PC-9 (cell line): ENCODE measurements at regions of chr5 and their contacts with region 1.

Region 1: DNA sequence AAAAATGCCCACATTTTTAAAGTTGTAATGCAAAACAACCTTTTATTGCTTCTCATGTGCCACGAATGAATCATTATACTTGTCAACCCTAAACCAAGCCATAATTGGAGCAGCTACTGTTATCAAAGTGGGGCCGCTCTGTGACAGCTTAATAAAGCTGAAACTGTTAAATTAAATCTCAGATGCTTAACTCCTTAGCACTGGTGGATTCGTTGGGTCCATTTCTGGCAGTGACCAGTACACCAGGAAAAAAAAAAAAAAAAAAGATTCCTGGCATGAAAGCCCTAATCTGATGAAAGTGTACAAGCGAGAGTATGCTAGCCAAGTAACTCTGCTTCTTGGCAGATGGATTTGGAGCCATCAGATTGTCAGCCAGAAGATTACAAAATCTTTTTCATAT is 164.8 kb downstream of the ZSWIM6 start:
- DNase-seq: no peak
- H3K4me3 ChIP-seq: no peak overlapping the region
- H3K27ac ChIP-seq: no peak overlapping the region
- H3K4me1 ChIP-seq: no peaks in the 10 kb centered on the region
- H3K27me3 ChIP-seq: no peaks in the 10 kb centered on the region
- CTCF ChIP-seq: no peak

Region 2: GRCh38 chr5:61575581-61575980 is 78.7 kb after region 1 on chr5:
- CTCF ChIA-PET with region 1: interaction called, 13 read pairs
- POLR2A ChIA-PET with region 1: no interaction called
- intact Hi-C with region 1: no loop called
- DNase-seq: no peak
- H3K4me3 ChIP-seq: no peak overlapping the region
- H3K27ac ChIP-seq: no peak overlapping the region
- H3K4me1 ChIP-seq: no peaks in the 10 kb centered on the region
- H3K27me3 ChIP-seq: peaks cover 9% of the 10 kb centered on the region
- CTCF ChIP-seq: no peak